Testis (tissue), 5 donors: ENCODE measurements at regions of chr12 and their contacts with region 1.

Region 1: DNA sequence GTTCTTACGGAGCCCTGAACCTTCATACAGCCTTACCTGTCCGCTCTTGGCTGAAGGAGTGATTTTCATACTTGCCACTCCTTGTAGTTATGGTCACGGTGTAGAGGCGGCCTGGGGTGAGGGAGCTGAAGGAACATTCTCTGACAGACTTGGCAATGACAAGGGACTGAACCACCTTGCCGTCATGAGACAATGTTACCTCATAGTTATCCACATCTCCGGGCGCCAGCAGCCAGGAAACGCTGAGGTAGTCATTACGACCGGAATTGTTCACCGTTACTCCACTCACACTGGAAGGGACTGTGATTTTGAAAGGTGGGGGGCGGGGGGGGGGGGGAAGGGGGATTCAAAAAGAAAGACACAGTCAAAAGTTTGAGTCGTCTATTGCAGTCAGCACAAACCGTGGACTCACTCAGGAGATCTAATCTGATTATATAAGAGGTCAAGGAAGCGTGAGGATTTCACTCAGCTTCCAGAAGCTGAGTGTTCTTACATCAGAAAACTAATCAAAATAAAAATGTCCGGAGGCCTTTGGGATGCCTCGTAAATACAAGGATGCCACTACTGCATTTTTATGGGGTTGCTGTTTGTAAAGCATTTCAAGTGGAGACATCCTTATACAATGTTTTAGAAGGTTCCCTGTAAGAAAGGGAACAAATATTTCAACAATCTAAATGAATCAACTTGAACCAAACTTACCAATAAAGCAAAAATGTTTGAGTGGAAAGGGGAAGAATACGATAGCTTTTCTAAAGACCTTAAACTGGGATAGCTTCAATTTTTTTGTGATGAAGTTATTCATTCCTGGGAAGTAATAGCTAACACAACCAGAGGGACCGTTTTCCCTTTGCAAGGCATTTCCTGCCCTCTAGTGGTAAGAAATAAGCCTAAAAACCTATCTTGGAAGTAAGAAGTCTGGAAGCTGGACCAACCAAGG is 60.6 kb downstream of the PTPRB start:
- DNase-seq: peak; percentile 20
- H3K4me3 ChIP-seq: no peak overlapping the region
- H3K27ac ChIP-seq: no peak overlapping the region
- H3K4me1 ChIP-seq: no peaks in the 10 kb centered on the region
- H3K27me3 ChIP-seq: no peaks in the 10 kb centered on the region
- CTCF ChIP-seq: peak; percentile 71 to 80 (median 79)
- POLR2A ChIP-seq: no peak

Region 2: DNA sequence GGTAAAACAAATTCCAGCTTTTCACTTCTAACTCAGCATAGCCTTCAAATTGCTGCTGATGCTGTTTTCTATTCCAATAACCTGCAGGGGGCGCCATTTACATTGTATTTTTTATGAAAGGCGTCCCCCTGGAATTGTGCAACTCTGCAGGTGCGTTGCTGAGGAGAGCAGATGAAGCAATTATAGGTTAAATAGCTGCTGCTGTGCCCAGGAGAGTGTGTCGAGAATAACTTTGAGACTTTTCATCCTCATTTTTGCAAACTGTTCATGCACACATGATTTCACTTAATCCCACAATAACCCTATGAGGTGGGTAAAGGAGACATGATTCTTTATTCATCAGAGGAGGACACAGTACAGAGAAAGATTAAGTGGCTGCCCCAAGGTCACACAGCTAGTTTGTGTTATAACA is 675.9 kb before region 1 on chr12:
- intact Hi-C with region 1: loop called (anchors 10 kb)
- DNase-seq: peak; percentile 89
- H3K4me3 ChIP-seq: no peak overlapping the region
- H3K27ac ChIP-seq: no peak overlapping the region
- H3K4me1 ChIP-seq: no peaks in the 10 kb centered on the region
- H3K27me3 ChIP-seq: no peaks in the 10 kb centered on the region
- CTCF ChIP-seq: peak; percentile 70 to 88 (median 78)
- POLR2A ChIP-seq: no peak